OCI-LY7 (cell line): ENCODE measurements at regions of chr11 and their contacts with region 1.

Region 1: GRCh38 chr11:65366340-65366773 is 11.8 kb downstream of the TIGD3 start:
- DNase-seq: peak; percentile 80
- H3K4me3 ChIP-seq: no peak overlapping the region
- H3K27ac ChIP-seq: no peak overlapping the region
- H3K4me1 ChIP-seq: peaks cover 16% of the 10 kb centered on the region
- CTCF ChIP-seq: peak; percentile 79

Region 2: DNA sequence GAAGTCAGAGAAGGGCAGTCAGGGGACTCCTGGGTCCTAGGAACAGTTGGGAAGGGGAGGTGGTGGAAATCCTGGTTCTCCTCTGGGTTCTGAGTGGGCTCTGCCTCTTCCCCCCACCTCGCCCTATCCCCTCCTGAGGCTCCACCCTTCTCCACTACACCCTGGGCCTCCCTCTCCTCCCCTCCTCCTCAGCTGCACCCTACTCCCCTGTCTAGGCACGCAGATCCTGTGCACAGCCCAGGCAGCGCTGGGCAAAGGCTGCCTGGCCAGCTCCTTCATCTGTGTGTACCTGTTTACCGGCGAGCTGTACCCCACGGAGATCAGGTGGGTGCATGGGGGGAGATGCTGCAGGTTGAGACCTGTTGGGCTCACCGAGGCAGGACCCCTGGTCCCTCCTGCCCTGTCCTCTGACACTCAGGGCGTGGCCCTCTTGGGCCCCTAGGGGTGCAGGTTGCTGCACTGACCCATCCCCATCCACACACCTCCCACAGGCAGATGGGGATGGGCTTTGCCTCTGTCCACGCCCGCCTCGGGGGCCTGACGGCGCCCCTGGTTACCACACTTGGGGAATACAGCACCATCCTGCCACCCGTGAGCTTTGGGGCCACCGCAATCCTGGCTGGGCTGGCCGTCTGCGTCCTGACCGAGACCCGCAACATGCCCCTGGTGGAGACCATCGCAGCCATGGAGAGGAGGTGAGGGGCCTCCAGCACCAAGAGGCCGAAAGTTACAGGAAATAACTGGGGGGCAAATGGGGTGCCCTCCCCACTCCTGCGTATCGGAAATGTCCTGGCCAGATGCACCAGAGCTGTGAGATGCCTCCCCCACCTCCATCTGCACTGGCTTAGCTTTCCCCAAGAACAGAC is 129.9 kb before region 1 on chr11:
- CTCF ChIA-PET with region 1: no interaction called
- POLR2A ChIA-PET with region 1: no interaction called
- intact Hi-C with region 1: no loop called
- DNase-seq: no peak
- H3K4me3 ChIP-seq: no peak overlapping the region
- H3K27ac ChIP-seq: no peak overlapping the region
- H3K4me1 ChIP-seq: no peaks in the 10 kb centered on the region
- CTCF ChIP-seq: no peak

Region 3: DNA sequence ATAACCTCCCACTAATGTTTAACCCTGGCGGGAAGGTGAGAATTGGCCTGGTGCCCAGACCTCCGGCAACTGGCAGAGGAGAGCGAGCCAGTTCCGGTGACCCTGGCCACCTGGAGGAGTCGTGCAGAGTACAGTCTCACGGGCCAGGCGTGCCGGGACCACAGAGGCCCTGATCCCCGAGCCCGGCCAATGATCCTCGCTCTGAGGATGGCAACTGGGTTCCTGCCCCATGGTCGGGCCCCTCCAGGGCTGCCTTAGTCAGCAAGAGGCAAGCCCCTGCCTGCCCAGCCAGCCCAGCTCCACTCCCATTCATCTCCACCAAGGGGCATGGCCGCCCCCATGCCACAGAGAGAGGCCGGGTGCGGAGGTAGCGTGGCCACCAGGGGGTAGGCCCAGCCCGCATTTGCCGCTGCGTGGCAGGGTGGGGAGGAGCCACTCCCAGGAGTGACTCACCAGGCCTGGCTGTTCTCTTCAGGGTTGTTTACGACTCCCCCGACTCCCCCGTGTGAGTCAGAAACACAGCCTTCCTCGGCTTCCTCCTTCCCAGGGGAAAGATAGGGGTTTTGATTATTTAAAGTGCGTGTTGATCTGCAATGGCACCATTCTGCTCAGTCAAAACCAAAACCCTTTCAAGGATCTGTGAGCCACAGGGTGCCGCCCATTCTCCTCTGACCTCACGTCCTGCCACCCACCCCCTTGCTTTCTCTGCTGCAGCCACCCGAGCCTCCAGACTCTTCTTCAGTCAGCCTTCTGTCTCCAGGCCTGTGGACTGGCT is 15.9 kb after region 1 on chr11 and contains the start of gene SLC25A45:
- CTCF ChIA-PET with region 1: no interaction called
- POLR2A ChIA-PET with region 1: interaction called, 5 read pairs
- intact Hi-C with region 1: loop called (anchors 1 kb)
- DNase-seq: peak; percentile 86
- H3K4me3 ChIP-seq: peak within 1 kb of the TSS; percentile 68
- H3K27ac ChIP-seq: peak within 1 kb of the TSS; percentile 52
- H3K4me1 ChIP-seq: peaks cover 51% of the 10 kb centered on the region
- CTCF ChIP-seq: peak; percentile 84
- total RNA-seq, gene SLC25A45: 5.9 and 7.0 TPM in 2 replicates

Region 4: GRCh38 chr11:65432686-65433582 is 66.6 kb after region 1 on chr11:
- CTCF ChIA-PET with region 1: no interaction called
- POLR2A ChIA-PET with region 1: no interaction called
- intact Hi-C with region 1: loop called (anchors 1 kb)
- DNase-seq: peak; percentile 72
- H3K4me3 ChIP-seq: no peak overlapping the region
- H3K27ac ChIP-seq: peak overlapping the region; percentile 97
- H3K4me1 ChIP-seq: peaks cover 89% of the 10 kb centered on the region
- CTCF ChIP-seq: peak; percentile 84

Region 5: GRCh38 chr11:65471410-65471762 is 105.0 kb after region 1 on chr11:
- CTCF ChIA-PET with region 1: no interaction called
- POLR2A ChIA-PET with region 1: no interaction called
- intact Hi-C with region 1: loop called (anchors 1 kb)
- DNase-seq: peak; percentile 74
- H3K4me3 ChIP-seq: peak overlapping the region; percentile 54
- H3K27ac ChIP-seq: peak overlapping the region; percentile 53
- H3K4me1 ChIP-seq: peaks cover 40% of the 10 kb centered on the region
- CTCF ChIP-seq: peak; percentile 82

Region 6: GRCh38 chr11:65506770-65507505 is 140.6 kb after region 1 on chr11:
- CTCF ChIA-PET with region 1: no interaction called
- POLR2A ChIA-PET with region 1: interaction called, 4 read pairs
- intact Hi-C with region 1: loop called (anchors 1 kb)
- DNase-seq: peak; percentile 71
- H3K4me3 ChIP-seq: peak overlapping the region; percentile 79
- H3K27ac ChIP-seq: peak overlapping the region; percentile 98
- H3K4me1 ChIP-seq: peaks cover 65% of the 10 kb centered on the region
- CTCF ChIP-seq: no peak

Region 7: GRCh38 chr11:65540297-65541092 is 174.1 kb after region 1 on chr11:
- CTCF ChIA-PET with region 1: no interaction called
- POLR2A ChIA-PET with region 1: no interaction called
- intact Hi-C with region 1: no loop called
- DNase-seq: peak; percentile 92
- H3K4me3 ChIP-seq: peak overlapping the region; percentile 71
- H3K27ac ChIP-seq: peak overlapping the region; percentile 61
- H3K4me1 ChIP-seq: peaks cover 23% of the 10 kb centered on the region
- CTCF ChIP-seq: peak; percentile 90

Region 8: GRCh38 chr11:65551572-65552398 is 185.4 kb after region 1 on chr11:
- CTCF ChIA-PET with region 1: no interaction called
- POLR2A ChIA-PET with region 1: no interaction called
- intact Hi-C with region 1: loop called (anchors 1 kb)
- DNase-seq: peak; percentile 91
- H3K4me3 ChIP-seq: no peak overlapping the region
- H3K27ac ChIP-seq: peak overlapping the region; percentile 56
- H3K4me1 ChIP-seq: peaks cover 51% of the 10 kb centered on the region
- CTCF ChIP-seq: peak; percentile 82